ENCODE measurements at regions of chr9 and their contacts with region 1.

Region 1: GRCh38 chr9:98998441-98999151 is 54.9 kb downstream of the COL15A1 start:
- DNase-seq: peak in 8 of 9 donors; percentile 9 to 73 (median 29)
- ATAC-seq: peak; percentile 75
- H3K4me3 ChIP-seq: no peak overlapping the region
- H3K4me3 Mint-ChIP-seq: no peak overlapping the region
- H3K27ac ChIP-seq: no peak overlapping the region
- H3K27ac Mint-ChIP-seq: no peak overlapping the region
- H3K4me1 ChIP-seq: peaks cover 4 to 14% of the 10 kb centered on the region in 2 donors
- H3K4me1 Mint-ChIP-seq: peaks cover 17 to 45% (median 21%) of the 10 kb centered on the region in 7 donors
- H3K27me3 ChIP-seq: no peaks in the 10 kb centered on the region
- H3K27me3 Mint-ChIP-seq: peaks cover 0 to 32% (median 0%) of the 10 kb centered on the region in 5 donors

Region 2: DNA sequence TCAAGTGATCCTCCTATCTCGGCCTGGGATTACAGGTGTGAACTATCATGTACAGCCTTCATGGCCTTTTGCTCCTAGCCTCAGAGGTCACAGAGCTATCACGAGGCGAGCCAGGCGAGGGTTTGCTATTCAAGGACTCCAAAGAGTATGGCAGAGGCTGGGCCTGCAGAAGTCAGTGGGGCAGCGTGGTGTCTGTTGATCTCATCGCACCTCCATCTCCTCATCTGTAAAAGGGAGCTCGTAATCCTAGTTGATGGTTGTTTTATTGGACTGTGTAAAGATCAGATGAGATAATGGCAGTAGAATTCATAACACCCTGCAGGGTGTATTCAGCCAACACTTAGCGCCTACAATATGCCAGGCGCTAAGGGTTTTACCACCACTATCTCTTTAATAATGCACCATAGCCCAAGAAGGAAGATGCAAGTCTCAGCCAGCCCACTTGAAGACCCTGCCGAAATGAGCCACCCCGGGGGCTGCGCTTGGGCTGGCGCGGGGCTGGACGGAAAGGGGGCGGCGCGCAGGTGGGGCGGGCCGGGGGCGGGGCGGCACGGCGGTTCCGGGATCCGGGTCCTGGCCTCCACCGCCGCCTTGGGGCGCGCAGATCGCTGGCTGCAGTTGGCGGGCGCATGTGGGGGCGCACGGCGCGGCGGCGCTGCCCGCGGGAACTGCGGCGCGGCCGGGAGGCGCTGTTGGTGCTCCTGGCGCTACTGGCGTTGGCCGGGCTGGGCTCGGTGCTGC is 191.4 kb before region 1 on chr9 and contains the start of gene GALNT12:
- CTCF ChIA-PET with region 1: interaction called, 5 read pairs
- POLR2A ChIA-PET with region 1: no interaction called
- intact Hi-C with region 1: loop called in 1 of 2 experiments (anchors 2 kb)
- DNase-seq: peak; percentile 31 to 60 (median 48)
- ATAC-seq: peak; percentile 87
- H3K4me3 ChIP-seq: peak within 1 kb of the TSS; percentile 56
- H3K4me3 Mint-ChIP-seq: peak within 1 kb of the TSS; percentile 80 to 95 (median 92)
- H3K27ac ChIP-seq: peak within 1 kb of the TSS; percentile 12
- H3K27ac Mint-ChIP-seq: peak within 1 kb of the TSS; percentile 7 to 91 (median 71)
- H3K4me1 ChIP-seq: peaks cover 11 to 16% of the 10 kb centered on the region in 2 donors
- H3K4me1 Mint-ChIP-seq: peaks cover 15 to 42% (median 37%) of the 10 kb centered on the region in 7 donors
- H3K27me3 ChIP-seq: no peaks in the 10 kb centered on the region
- H3K27me3 Mint-ChIP-seq: peaks cover 0 to 52% (median 0%) of the 10 kb centered on the region in 5 donors
- total RNA-seq, gene GALNT12: 6.2 to 14.3 (median 11.4) TPM

Region 3: GRCh38 chr9:98848450-98849149 is 150.0 kb before region 1 on chr9:
- CTCF ChIA-PET with region 1: interaction called, 3 read pairs
- POLR2A ChIA-PET with region 1: no interaction called
- intact Hi-C with region 1: loop called (anchors 1 kb)
- DNase-seq: peak; percentile 26 to 74 (median 55)
- ATAC-seq: peak; percentile 95
- H3K4me3 ChIP-seq: no peak overlapping the region
- H3K4me3 Mint-ChIP-seq: no peak overlapping the region
- H3K27ac ChIP-seq: no peak overlapping the region
- H3K27ac Mint-ChIP-seq: peak overlapping the region in 4 of 9 donors; percentile 3 to 64 (median 38)
- H3K4me1 ChIP-seq: no peaks in the 10 kb centered on the region
- H3K4me1 Mint-ChIP-seq: peaks cover 0 to 15% (median 4%) of the 10 kb centered on the region in 7 donors
- H3K27me3 ChIP-seq: no peaks in the 10 kb centered on the region
- H3K27me3 Mint-ChIP-seq: no peaks in the 10 kb centered on the region

Region 4: DNA sequence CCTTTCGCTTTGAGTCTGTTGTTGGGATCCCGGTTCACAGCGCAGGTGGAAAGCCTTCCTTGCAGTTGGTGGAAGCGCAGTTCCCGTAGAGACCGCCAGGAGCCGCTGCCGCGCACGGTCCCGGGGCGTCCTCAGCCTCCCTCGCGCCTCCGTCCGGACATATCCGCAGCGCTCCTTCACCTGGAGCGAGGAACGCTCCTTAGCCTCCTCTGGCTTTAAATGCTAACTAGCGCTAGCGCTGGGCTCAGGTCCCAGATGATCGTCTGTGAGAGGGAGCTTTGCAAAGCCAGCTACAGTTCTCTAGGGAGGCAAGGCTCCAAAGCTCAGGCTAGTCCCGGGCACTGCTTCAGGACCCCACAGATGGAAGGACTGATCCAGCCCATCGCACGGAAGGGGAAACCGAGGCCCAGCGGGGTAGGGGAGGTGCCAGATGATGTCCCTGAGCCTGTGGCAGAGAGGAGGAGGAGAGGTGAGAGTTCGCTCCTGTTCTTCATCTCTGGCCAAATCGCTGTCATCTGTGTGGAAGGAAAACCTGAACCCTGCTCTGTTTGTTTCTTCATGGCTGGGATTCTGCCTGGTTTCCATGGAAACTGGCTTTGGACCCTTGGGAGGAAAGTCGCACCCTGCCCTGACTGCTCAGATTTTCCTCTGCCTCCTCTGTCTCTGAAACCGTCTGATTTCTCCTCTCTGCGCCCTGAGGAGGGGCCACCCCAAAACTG is 23.4 kb before region 1 on chr9:
- CTCF ChIA-PET with region 1: interaction called, 5 read pairs
- POLR2A ChIA-PET with region 1: no interaction called
- intact Hi-C with region 1: loop called (anchors 1 to 2 kb)
- DNase-seq: peak; percentile 55 to 86 (median 75)
- ATAC-seq: peak; percentile 94
- H3K4me3 ChIP-seq: peak overlapping the region; percentile 40
- H3K4me3 Mint-ChIP-seq: peak overlapping the region in 9 of 10 donors; percentile 40 to 75 (median 59)
- H3K27ac ChIP-seq: no peak overlapping the region
- H3K27ac Mint-ChIP-seq: no peak overlapping the region
- H3K4me1 ChIP-seq: no peaks in the 10 kb centered on the region
- H3K4me1 Mint-ChIP-seq: peaks cover 0 to 16% (median 5%) of the 10 kb centered on the region in 7 donors
- H3K27me3 ChIP-seq: no peaks in the 10 kb centered on the region
- H3K27me3 Mint-ChIP-seq: peaks cover 0 to 33% (median 10%) of the 10 kb centered on the region in 5 donors

Region 5: GRCh38 chr9:99104459-99105151 is 106.0 kb after region 1 on chr9 and contains the start of gene TGFBR1:
- CTCF ChIA-PET with region 1: interaction called, 23 read pairs
- POLR2A ChIA-PET with region 1: interaction called, 3 read pairs
- intact Hi-C with region 1: loop called (anchors 1 kb)
- DNase-seq: peak; percentile 87 to 98 (median 89)
- ATAC-seq: peak; percentile 91
- H3K4me3 ChIP-seq: peak within 1 kb of the TSS; percentile 73
- H3K4me3 Mint-ChIP-seq: peak within 1 kb of the TSS; percentile 90 to 97 (median 94)
- H3K27ac ChIP-seq: peak within 1 kb of the TSS; percentile 74
- H3K27ac Mint-ChIP-seq: peak within 1 kb of the TSS; percentile 78 to 99 (median 95)
- H3K4me1 ChIP-seq: peaks cover 43 to 49% of the 10 kb centered on the region in 2 donors
- H3K4me1 Mint-ChIP-seq: peaks cover 36 to 65% (median 59%) of the 10 kb centered on the region in 7 donors
- H3K27me3 ChIP-seq: no peaks in the 10 kb centered on the region
- H3K27me3 Mint-ChIP-seq: no peaks in the 10 kb centered on the region
- total RNA-seq, gene TGFBR1: 20.6 to 95.5 (median 29.5) TPM

Region 6: GRCh38 chr9:99134893-99135341 is 136.3 kb after region 1 on chr9:
- CTCF ChIA-PET with region 1: interaction called, 155 read pairs
- POLR2A ChIA-PET with region 1: interaction called, 12 read pairs
- intact Hi-C with region 1: loop called (anchors 1 kb)
- DNase-seq: peak in 7 of 9 donors; percentile 32 to 54 (median 42)
- ATAC-seq: peak; percentile 67
- H3K4me3 ChIP-seq: peak overlapping the region; percentile 32
- H3K4me3 Mint-ChIP-seq: peak overlapping the region; percentile 61 to 82 (median 74)
- H3K27ac ChIP-seq: peak overlapping the region; percentile 50
- H3K27ac Mint-ChIP-seq: peak overlapping the region; percentile 72 to 96 (median 89)
- H3K4me1 ChIP-seq: peaks cover 21 to 53% of the 10 kb centered on the region in 2 donors
- H3K4me1 Mint-ChIP-seq: peaks cover 48 to 95% (median 90%) of the 10 kb centered on the region in 7 donors
- H3K27me3 ChIP-seq: no peaks in the 10 kb centered on the region
- H3K27me3 Mint-ChIP-seq: no peaks in the 10 kb centered on the region

Measured in naive thymus-derived CD4-positive, alpha-beta T cell (primary cell).